ENCODE measurements at regions of chrX and their contacts with region 1.

Region 1: GRCh38 chrX:64205735-64206491 is 405 bp upstream of the AMER1 start:
- DNase-seq: peak; percentile 89
- ATAC-seq: peak; percentile 85
- H3K4me3 Mint-ChIP-seq: peak overlapping the region; percentile 73
- H3K27ac Mint-ChIP-seq: peak overlapping the region; percentile 80; the same call in 1 of the 2 replicates
- H3K4me1 Mint-ChIP-seq: peaks cover 13% of the 10 kb centered on the region
- H3K27me3 Mint-ChIP-seq: peaks cover 14% of the 10 kb centered on the region
- CTCF ChIP-seq: no peak

Region 2: GRCh38 chrX:63930140-63930539 is 275.8 kb before region 1 on chrX:
- CTCF ChIA-PET with region 1: interaction called, 10 read pairs
- POLR2A ChIA-PET with region 1: no interaction called
- DNase-seq: peak; percentile 13
- ATAC-seq: peak; percentile 66
- H3K4me3 Mint-ChIP-seq: no peak overlapping the region
- H3K27ac Mint-ChIP-seq: no peak overlapping the region
- H3K4me1 Mint-ChIP-seq: peaks cover 23% of the 10 kb centered on the region
- H3K27me3 Mint-ChIP-seq: no peaks in the 10 kb centered on the region; the same call in 1 of the 2 replicates
- CTCF ChIP-seq: 0 out of 2 replicates have a peak, but pooled peaks have one; percentile 23

Region 3: GRCh38 chrX:64152857-64153256 is 53.1 kb before region 1 on chrX:
- CTCF ChIA-PET with region 1: interaction called, 11 read pairs
- POLR2A ChIA-PET with region 1: no interaction called
- DNase-seq: peak; percentile 54
- ATAC-seq: peak; percentile 64
- H3K4me3 Mint-ChIP-seq: no peak overlapping the region
- H3K27ac Mint-ChIP-seq: peak overlapping the region; percentile 41; the same call in 1 of the 2 replicates
- H3K4me1 Mint-ChIP-seq: peaks cover 26% of the 10 kb centered on the region
- H3K27me3 Mint-ChIP-seq: 0 out of 2 replicates have a peak, but pooled peaks cover 3% of the 10 kb centered on the region
- CTCF ChIP-seq: no peak

Measured in WTC11 (cell line).